Activated T-helper 1 cell treated with anti-CD3 and anti-CD28 coated beads, Interleukin-12 subunit alpha, Interleukin-12 subunit beta, Interleukin-2, Interleukin-4 antibody, amounts not matched to agents 30 ng/mL and 10 ng/mL and 1 ng/mL, durations not matched to agents 14 hours and 24 hours and 36 hours (primary cell): ENCODE measurements at regions of chr3 and their contacts with region 1.

Region 1: GRCh38 chr3:28916713-28917499 is 364.0 kb upstream of the RBMS3 start:
- DNase-seq: peak; percentile 9
- H3K4me3 Mint-ChIP-seq: no peak overlapping the region
- H3K27ac Mint-ChIP-seq: no peak overlapping the region
- H3K4me1 Mint-ChIP-seq: peaks cover 31% of the 10 kb centered on the region
- H3K27me3 Mint-ChIP-seq: peaks cover 10% of the 10 kb centered on the region

Region 2: DNA sequence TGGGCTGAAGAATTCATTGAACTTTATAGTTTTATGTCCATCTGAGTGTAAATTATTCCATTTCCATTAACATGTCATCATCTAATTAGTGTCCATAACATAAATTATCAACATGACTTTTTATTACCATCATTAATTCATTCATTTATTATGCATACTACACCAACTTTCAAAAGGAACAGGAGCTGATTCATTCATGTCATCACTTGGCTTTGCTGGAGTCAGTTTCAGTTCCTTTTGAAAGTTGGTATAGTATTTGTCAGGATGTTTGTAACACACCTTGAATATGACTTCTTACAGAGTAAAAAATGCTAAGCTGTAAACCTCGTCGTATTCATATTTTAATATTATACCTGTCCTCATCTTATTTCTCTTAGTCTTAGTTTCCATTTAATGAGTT is 66.0 kb after region 1 on chr3:
- intact Hi-C with region 1: loop called (anchors 5 kb)
- DNase-seq: no peak
- H3K4me3 Mint-ChIP-seq: no peak overlapping the region
- H3K27ac Mint-ChIP-seq: no peak overlapping the region
- H3K4me1 Mint-ChIP-seq: peaks cover 6% of the 10 kb centered on the region
- H3K27me3 Mint-ChIP-seq: peaks cover 1% of the 10 kb centered on the region

Region 3: DNA sequence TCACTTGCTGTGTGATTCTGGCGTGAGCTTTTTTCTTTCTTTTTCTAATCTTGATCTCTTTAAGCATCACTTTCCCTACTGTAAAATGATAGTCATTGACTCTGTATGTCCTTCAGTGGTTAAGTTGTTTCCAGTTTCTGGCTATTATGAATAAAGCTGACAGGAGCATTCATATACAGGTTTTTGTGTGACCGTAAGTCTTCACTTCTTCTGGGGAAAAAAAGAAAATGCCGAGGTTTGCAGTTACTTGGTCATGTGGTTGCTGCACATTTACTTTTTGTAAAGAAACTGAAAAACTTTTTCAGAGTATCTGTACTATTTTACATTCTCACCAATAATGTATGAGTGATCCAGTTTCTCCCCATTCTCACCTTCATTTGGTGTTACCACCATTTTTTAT is 116.6 kb after region 1 on chr3:
- intact Hi-C with region 1: no loop called
- DNase-seq: no peak
- H3K4me3 Mint-ChIP-seq: no peak overlapping the region
- H3K27ac Mint-ChIP-seq: no peak overlapping the region
- H3K4me1 Mint-ChIP-seq: no peaks in the 10 kb centered on the region
- H3K27me3 Mint-ChIP-seq: peaks cover 2% of the 10 kb centered on the region

Region 4: GRCh38 chr3:29291262-29291981 is 374.5 kb after region 1 on chr3:
- intact Hi-C with region 1: no loop called
- DNase-seq: no peak
- H3K4me3 Mint-ChIP-seq: no peak overlapping the region
- H3K27ac Mint-ChIP-seq: no peak overlapping the region
- H3K4me1 Mint-ChIP-seq: peaks cover 6% of the 10 kb centered on the region
- H3K27me3 Mint-ChIP-seq: peaks cover 4% of the 10 kb centered on the region

Region 5: GRCh38 chr3:29353807-29354206 is 436.9 kb after region 1 on chr3:
- intact Hi-C with region 1: loop called (anchors 10 kb)
- DNase-seq: no peak
- H3K4me3 Mint-ChIP-seq: no peak overlapping the region
- H3K27ac Mint-ChIP-seq: no peak overlapping the region
- H3K4me1 Mint-ChIP-seq: peaks cover 17% of the 10 kb centered on the region
- H3K27me3 Mint-ChIP-seq: no peaks in the 10 kb centered on the region

Region 6: DNA sequence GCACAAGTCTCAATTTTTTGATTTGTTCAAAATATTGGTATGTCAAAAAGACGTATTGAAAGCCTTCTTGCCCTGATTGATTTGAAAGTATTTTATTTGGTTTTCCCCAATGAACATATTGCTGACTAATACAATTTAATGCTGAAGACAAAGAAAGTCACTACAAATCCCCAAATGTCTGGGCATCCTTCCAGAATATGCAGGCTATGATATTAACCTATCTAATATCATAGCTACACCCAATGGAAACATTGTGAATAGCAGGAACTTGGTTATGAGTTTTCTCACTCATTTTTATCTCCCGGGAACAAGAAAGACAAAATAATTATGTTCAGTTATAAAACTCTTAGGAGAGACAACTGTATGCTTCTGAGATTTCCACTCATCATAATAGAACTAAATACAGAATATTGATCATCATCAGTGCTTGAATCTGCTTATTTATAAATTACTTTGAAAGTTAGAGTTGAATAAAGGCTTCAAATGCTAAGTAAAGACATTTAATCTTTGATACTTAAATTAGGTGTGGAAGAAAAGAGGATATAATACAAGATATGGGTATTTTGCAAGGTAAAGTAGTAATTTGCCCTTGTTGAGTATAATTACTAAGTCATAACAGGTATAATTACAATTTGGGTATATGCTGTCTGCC is 847.8 kb after region 1 on chr3:
- intact Hi-C with region 1: loop called (anchors 10 kb)
- DNase-seq: no peak
- H3K4me3 Mint-ChIP-seq: no peak overlapping the region
- H3K27ac Mint-ChIP-seq: no peak overlapping the region
- H3K4me1 Mint-ChIP-seq: no peaks in the 10 kb centered on the region
- H3K27me3 Mint-ChIP-seq: peaks cover 4% of the 10 kb centered on the region

Region 7: DNA sequence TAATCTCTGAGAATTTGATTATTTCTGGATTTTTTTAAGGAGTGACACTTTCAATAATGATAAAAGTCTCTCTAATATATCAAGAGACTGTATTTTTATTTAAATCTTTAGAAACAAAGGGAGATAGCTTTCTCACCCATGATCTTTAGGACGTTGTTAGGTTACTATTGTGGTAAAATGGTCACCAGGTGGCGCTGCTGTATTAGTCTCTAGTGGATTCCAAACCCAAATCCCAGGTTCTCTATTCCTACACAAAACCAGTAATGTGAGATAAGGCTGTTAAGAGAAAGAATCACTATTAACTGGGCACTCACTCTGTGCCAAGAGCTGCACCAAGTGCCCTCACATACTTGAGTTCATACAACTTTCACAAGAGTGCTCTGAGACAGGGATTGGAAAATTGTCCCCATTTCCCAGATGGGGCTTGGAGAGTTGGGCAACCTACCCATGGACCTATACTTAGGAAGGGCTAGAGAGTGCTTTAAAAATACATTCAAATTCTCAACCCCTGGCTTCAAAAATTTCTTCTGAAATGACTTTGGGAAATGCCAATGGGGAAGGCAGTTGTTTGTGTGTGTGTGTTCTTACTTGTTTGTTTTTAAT is 1096.1 kb after region 1 on chr3:
- intact Hi-C with region 1: loop called (anchors 10 kb)
- DNase-seq: peak; percentile 3
- H3K4me3 Mint-ChIP-seq: no peak overlapping the region
- H3K27ac Mint-ChIP-seq: no peak overlapping the region
- H3K4me1 Mint-ChIP-seq: no peaks in the 10 kb centered on the region
- H3K27me3 Mint-ChIP-seq: peaks cover 5% of the 10 kb centered on the region